Naive thymus-derived CD4-positive, alpha-beta T cell (primary cell): ENCODE measurements at regions of chr9 and their contacts with region 1.

Region 1: DNA sequence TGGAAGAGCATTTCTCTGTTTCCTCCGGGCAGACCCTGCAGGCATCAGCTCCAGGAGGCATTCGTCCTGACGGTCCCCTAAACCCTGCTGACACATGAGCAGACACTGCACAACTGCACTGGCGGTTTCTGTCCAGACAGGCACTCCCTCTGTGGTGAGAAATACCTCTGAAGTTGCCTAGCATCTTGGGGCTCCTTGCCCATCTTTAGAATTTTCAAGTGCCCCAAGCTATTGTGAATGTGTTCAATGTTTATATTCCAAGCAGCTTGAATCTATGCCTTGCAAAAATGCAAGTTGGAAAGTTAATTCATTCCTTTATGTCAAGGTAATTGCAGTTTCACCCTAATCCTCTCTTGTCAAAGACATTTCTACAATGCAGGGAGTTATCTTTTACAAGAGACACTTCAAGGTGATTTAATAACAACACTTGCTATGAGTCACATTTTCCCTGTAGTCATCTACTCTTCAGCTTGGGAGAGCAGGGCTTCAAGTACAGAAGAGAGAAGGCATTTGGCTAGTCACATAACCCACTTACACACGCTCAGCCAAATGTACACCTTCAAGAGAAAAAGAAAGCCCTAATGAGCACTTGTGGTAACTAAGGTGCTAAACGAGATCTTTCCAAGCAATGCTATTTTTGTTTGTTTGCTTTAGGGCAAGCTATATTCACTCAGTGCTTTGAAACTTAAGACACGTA is 302.5 kb downstream of the MLLT3 start:
- DNase-seq: peak in 1 of 9 donors; percentile 33
- ATAC-seq: no peak
- H3K4me3 ChIP-seq: no peak overlapping the region
- H3K4me3 Mint-ChIP-seq: peak overlapping the region in 9 of 10 donors; percentile 5 to 89 (median 33)
- H3K27ac ChIP-seq: no peak overlapping the region
- H3K27ac Mint-ChIP-seq: peak overlapping the region; percentile 62 to 99 (median 92)
- H3K4me1 ChIP-seq: peaks cover 44 to 95% of the 10 kb centered on the region in 2 donors
- H3K4me1 Mint-ChIP-seq: peaks cover 53 to 100% (median 96%) of the 10 kb centered on the region in 7 donors
- H3K27me3 ChIP-seq: no peaks in the 10 kb centered on the region
- H3K27me3 Mint-ChIP-seq: peaks cover 0 to 2% (median 0%) of the 10 kb centered on the region in 5 donors

Region 2: DNA sequence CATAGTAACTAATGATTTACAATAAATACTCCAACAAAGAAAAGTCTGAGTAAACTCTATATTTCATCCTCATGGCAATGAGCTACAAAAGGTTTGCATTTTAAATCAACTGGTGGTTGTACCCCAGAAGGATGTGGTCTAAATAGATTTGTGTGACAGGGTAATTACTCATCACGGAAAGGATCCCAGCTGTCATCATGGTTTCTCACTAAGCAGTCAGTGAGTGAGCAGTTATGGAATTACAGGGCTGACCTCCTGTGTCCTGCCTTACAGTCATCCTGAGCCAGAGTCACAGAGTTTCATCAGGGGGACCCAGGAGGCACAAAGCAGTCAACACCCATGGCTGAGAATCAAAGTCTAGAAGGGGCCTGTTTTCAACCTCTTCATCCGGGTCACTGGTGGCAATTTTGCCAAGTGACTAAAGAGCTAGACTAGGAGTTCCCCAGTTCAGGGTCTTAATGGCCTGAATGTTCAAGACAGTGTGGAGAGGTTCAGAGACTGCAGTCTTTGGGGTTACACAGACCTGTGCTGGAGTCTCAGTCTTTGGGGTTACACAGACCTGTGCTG is 320.2 kb before region 1 on chr9:
- CTCF ChIA-PET with region 1: no interaction called
- POLR2A ChIA-PET with region 1: no interaction called
- intact Hi-C with region 1: loop called in 1 of 2 experiments (anchors 2 kb)
- DNase-seq: peak in 1 of 9 donors; percentile 61
- ATAC-seq: peak; percentile 37
- H3K4me3 ChIP-seq: no peak overlapping the region
- H3K4me3 Mint-ChIP-seq: peak overlapping the region in 1 of 10 donors; percentile 59
- H3K27ac ChIP-seq: no peak overlapping the region
- H3K27ac Mint-ChIP-seq: peak overlapping the region in 3 of 9 donors; percentile 30 to 93 (median 39)
- H3K4me1 ChIP-seq: peaks cover 0 to 11% of the 10 kb centered on the region in 2 donors
- H3K4me1 Mint-ChIP-seq: peaks cover 0 to 51% (median 8%) of the 10 kb centered on the region in 7 donors
- H3K27me3 ChIP-seq: no peaks in the 10 kb centered on the region
- H3K27me3 Mint-ChIP-seq: no peaks in the 10 kb centered on the region

Region 3: GRCh38 chr9:20209391-20210340 is 110.1 kb before region 1 on chr9:
- CTCF ChIA-PET with region 1: no interaction called
- POLR2A ChIA-PET with region 1: interaction called, 4 read pairs
- intact Hi-C with region 1: loop called in 1 of 2 experiments (anchors 1 kb)
- DNase-seq: peak in 8 of 9 donors; percentile 49 to 78 (median 71)
- ATAC-seq: peak; percentile 86
- H3K4me3 ChIP-seq: no peak overlapping the region
- H3K4me3 Mint-ChIP-seq: peak overlapping the region; percentile 58 to 92 (median 70)
- H3K27ac ChIP-seq: no peak overlapping the region
- H3K27ac Mint-ChIP-seq: peak overlapping the region; percentile 65 to 94 (median 85)
- H3K4me1 ChIP-seq: peaks cover 17 to 30% of the 10 kb centered on the region in 2 donors
- H3K4me1 Mint-ChIP-seq: peaks cover 31 to 46% (median 41%) of the 10 kb centered on the region in 7 donors
- H3K27me3 ChIP-seq: no peaks in the 10 kb centered on the region
- H3K27me3 Mint-ChIP-seq: no peaks in the 10 kb centered on the region

Region 4: GRCh38 chr9:20271096-20271495 is 48.7 kb before region 1 on chr9:
- CTCF ChIA-PET with region 1: interaction called, 4 read pairs
- POLR2A ChIA-PET with region 1: interaction called, 4 read pairs
- intact Hi-C with region 1: loop called in 1 of 2 experiments (anchors 5 kb)
- DNase-seq: peak in 5 of 9 donors; percentile 9 to 34 (median 25)
- ATAC-seq: no peak
- H3K4me3 ChIP-seq: no peak overlapping the region
- H3K4me3 Mint-ChIP-seq: no peak overlapping the region
- H3K27ac ChIP-seq: no peak overlapping the region
- H3K27ac Mint-ChIP-seq: peak overlapping the region in 5 of 9 donors; percentile 0 to 42 (median 12)
- H3K4me1 ChIP-seq: no peaks in the 10 kb centered on the region
- H3K4me1 Mint-ChIP-seq: peaks cover 7 to 35% (median 12%) of the 10 kb centered on the region in 7 donors
- H3K27me3 ChIP-seq: no peaks in the 10 kb centered on the region
- H3K27me3 Mint-ChIP-seq: no peaks in the 10 kb centered on the region

Region 5: DNA sequence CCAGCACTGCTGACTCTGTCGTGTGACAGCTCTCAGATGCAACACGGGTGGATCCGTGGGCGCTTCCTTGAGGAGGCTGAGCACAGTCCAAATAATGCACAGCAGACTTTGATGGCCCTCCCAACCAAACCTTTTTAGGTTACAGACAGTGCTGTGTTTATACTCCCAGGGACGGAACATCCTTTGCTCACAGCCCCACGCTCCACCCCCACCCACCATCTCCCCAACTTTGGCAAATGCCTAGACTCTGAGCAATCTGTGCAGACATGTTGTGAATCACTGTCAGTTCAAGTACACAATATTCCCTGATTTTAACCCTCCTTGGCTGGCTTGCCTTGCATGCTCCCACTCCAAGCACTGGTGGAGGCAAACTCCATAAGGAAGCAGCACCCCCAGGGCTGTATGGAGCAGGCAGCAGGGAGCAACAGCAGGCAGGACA is 22.1 kb before region 1 on chr9:
- CTCF ChIA-PET with region 1: interaction called, 5 read pairs
- POLR2A ChIA-PET with region 1: interaction called, 36 read pairs
- intact Hi-C with region 1: loop called in 1 of 2 experiments (anchors 1 kb)
- DNase-seq: no peak
- ATAC-seq: no peak
- H3K4me3 ChIP-seq: no peak overlapping the region
- H3K4me3 Mint-ChIP-seq: no peak overlapping the region
- H3K27ac ChIP-seq: no peak overlapping the region
- H3K27ac Mint-ChIP-seq: peak overlapping the region in 1 of 9 donors; percentile 83
- H3K4me1 ChIP-seq: peaks cover 0 to 25% of the 10 kb centered on the region in 2 donors
- H3K4me1 Mint-ChIP-seq: peaks cover 11 to 56% (median 43%) of the 10 kb centered on the region in 7 donors
- H3K27me3 ChIP-seq: no peaks in the 10 kb centered on the region
- H3K27me3 Mint-ChIP-seq: no peaks in the 10 kb centered on the region

Region 6: DNA sequence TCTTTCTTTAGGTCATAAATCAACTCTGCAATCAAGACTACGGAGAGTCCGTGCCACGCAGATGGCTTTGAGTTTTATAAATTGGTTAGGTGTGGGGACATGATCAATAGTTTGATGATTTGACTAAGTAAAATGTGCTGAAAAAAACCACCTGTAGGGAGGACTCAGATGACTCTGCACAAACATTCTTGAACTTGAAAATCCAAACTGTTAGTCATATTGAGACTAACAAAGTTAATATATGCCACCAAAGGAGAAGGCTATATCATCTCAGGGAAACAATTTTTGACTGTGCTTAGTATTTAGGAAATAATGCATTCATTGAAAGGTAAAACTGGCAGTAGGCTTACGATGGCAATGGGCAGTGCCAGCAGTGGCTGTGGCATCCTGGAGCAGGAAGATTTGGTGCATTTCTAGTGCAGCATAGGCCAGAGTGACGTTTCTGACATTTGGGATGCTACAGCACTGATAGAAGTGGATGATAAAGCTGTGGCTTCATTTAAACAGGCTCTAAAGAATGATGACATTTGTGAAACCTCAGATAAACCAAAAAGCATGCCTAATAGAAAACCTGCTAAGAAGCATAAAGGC is 11.4 kb after region 1 on chr9:
- CTCF ChIA-PET with region 1: interaction called, 12 read pairs
- POLR2A ChIA-PET with region 1: interaction called, 7 read pairs
- intact Hi-C with region 1: loop called (anchors 1 to 2 kb)
- DNase-seq: no peak
- ATAC-seq: no peak
- H3K4me3 ChIP-seq: no peak overlapping the region
- H3K4me3 Mint-ChIP-seq: peak overlapping the region in 1 of 10 donors; percentile 5
- H3K27ac ChIP-seq: no peak overlapping the region
- H3K27ac Mint-ChIP-seq: peak overlapping the region in 4 of 9 donors; percentile 8 to 42 (median 38)
- H3K4me1 ChIP-seq: peaks cover 6 to 8% of the 10 kb centered on the region in 2 donors
- H3K4me1 Mint-ChIP-seq: peaks cover 0 to 44% (median 30%) of the 10 kb centered on the region in 7 donors
- H3K27me3 ChIP-seq: no peaks in the 10 kb centered on the region
- H3K27me3 Mint-ChIP-seq: no peaks in the 10 kb centered on the region

Region 7: GRCh38 chr9:20508242-20508641 is 188.5 kb after region 1 on chr9:
- CTCF ChIA-PET with region 1: no interaction called
- POLR2A ChIA-PET with region 1: no interaction called
- intact Hi-C with region 1: loop called in 1 of 2 experiments (anchors 5 kb)
- DNase-seq: peak in 3 of 9 donors; percentile 8 to 22 (median 14)
- ATAC-seq: peak; percentile 60
- H3K4me3 ChIP-seq: no peak overlapping the region
- H3K4me3 Mint-ChIP-seq: peak overlapping the region; percentile 4 to 76 (median 64)
- H3K27ac ChIP-seq: peak overlapping the region; percentile 24
- H3K27ac Mint-ChIP-seq: peak overlapping the region; percentile 54 to 95 (median 85)
- H3K4me1 ChIP-seq: peaks cover 11 to 54% of the 10 kb centered on the region in 2 donors
- H3K4me1 Mint-ChIP-seq: peaks cover 64 to 90% (median 89%) of the 10 kb centered on the region in 7 donors
- H3K27me3 ChIP-seq: no peaks in the 10 kb centered on the region
- H3K27me3 Mint-ChIP-seq: no peaks in the 10 kb centered on the region